CD4-positive, alpha-beta memory T cell (primary cell): ENCODE measurements at regions of chr1 and their contacts with region 1.

Region 1: GRCh38 chr1:155091071-155091709 is 12.6 kb downstream of the EFNA3 start:
- DNase-seq: peak; percentile 72 to 78 (median 74)
- H3K4me3 ChIP-seq: no peak overlapping the region
- H3K4me3 Mint-ChIP-seq: no peak overlapping the region
- H3K27ac ChIP-seq: no peak overlapping the region
- H3K27ac Mint-ChIP-seq: no peak overlapping the region
- H3K4me1 ChIP-seq: peaks cover 14% of the 10 kb centered on the region
- H3K4me1 Mint-ChIP-seq: peaks cover 3 to 10% (median 5%) of the 10 kb centered on the region in 4 donors
- H3K27me3 ChIP-seq: no peaks in the 10 kb centered on the region
- H3K27me3 Mint-ChIP-seq: peaks cover 2 to 3% of the 10 kb centered on the region in 2 donors

Region 2: GRCh38 chr1:155063550-155064110 is 27.6 kb before region 1 on chr1 and contains the start of gene EFNA4:
- CTCF ChIA-PET with region 1: interaction called, 74 read pairs
- POLR2A ChIA-PET with region 1: interaction called, 62 read pairs
- intact Hi-C with region 1: no loop called
- DNase-seq: peak; percentile 83 to 87 (median 86)
- H3K4me3 ChIP-seq: peak within 1 kb of the TSS; percentile 63 to 70
- H3K4me3 Mint-ChIP-seq: peak within 1 kb of the TSS; percentile 91 to 99 (median 94)
- H3K27ac ChIP-seq: peak within 1 kb of the TSS; percentile 51
- H3K27ac Mint-ChIP-seq: peak within 1 kb of the TSS; percentile 81 to 94 (median 85)
- H3K4me1 ChIP-seq: peaks cover 35% of the 10 kb centered on the region
- H3K4me1 Mint-ChIP-seq: peaks cover 23 to 52% (median 32%) of the 10 kb centered on the region in 4 donors
- H3K27me3 ChIP-seq: no peaks in the 10 kb centered on the region
- H3K27me3 Mint-ChIP-seq: no peaks in the 10 kb centered on the region
- total RNA-seq, gene EFNA4: 6.0 to 8.5 TPM

Region 3: GRCh38 chr1:155127105-155127964 is 36.1 kb after region 1 on chr1 and contains the start of gene EFNA1:
- CTCF ChIA-PET with region 1: interaction called, 18 read pairs
- POLR2A ChIA-PET with region 1: no interaction called
- intact Hi-C with region 1: loop called (anchors 5 kb)
- DNase-seq: peak in 4 of 5 donors; percentile 31 to 47 (median 38)
- H3K4me3 ChIP-seq: peak within 1 kb of the TSS; percentile 52 to 58
- H3K4me3 Mint-ChIP-seq: peak within 1 kb of the TSS; percentile 80 to 94 (median 89)
- H3K27ac ChIP-seq: no peak within 1 kb of the TSS
- H3K27ac Mint-ChIP-seq: peak within 1 kb of the TSS; percentile 15 to 78 (median 71)
- H3K4me1 ChIP-seq: peaks cover 32% of the 10 kb centered on the region
- H3K4me1 Mint-ChIP-seq: peaks cover 18 to 45% (median 27%) of the 10 kb centered on the region in 4 donors
- H3K27me3 ChIP-seq: peaks cover 12% of the 10 kb centered on the region
- H3K27me3 Mint-ChIP-seq: peaks cover 9 to 15% of the 10 kb centered on the region in 2 donors
- total RNA-seq, gene EFNA1: 1.2 to 1.9 TPM

Region 4: DNA sequence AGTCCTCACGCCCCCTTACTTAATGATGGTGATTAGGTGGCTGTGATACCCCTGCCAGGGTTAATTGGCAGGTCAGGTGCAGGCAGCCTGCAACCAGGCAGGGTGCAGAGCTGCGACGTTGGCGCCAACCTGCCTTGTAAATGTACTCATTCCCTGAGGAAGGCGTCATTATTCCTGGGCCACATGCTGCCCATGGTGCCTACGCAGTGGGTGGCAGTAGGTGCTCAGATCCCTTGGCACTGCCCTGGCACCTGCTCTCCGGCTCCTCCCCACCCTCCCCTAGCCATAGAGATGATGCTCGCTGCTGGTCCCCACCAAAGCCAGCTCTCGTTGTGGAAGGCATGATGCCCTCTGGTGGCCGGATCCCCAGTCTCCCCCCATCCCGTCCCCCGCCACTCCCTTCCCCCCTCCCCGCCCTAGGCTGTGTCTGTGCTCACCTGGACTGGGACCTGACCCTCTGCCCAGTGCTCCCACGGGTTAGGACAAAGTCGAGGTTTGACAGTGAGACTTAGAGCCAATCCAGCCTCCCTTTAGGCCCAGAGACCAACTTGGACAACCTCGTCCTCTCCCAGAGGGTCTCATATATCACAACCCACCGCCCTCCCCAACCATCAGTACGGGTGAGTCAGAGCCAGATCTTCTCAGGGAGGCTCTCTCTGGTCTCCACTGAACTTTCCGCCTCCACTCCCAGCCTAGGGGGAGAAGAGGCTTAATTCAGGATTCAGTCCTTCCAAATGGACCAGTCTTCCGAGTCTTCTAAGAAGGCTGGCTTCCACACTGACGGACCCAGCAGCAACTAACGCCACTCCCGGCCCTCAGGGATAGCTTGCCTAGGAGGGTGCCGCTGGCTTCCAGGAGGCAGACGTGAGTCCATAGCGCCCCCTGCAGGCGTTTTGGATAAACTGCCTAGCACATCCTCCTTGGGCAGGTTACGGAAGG is 76.2 kb after region 1 on chr1:
- CTCF ChIA-PET with region 1: interaction called, 229 read pairs
- POLR2A ChIA-PET with region 1: interaction called, 27 read pairs
- intact Hi-C with region 1: loop called (anchors 1 kb)
- DNase-seq: peak; percentile 79 to 83 (median 81)
- H3K4me3 ChIP-seq: no peak overlapping the region
- H3K4me3 Mint-ChIP-seq: peak overlapping the region in 7 of 8 donors; percentile 46 to 68 (median 59)
- H3K27ac ChIP-seq: no peak overlapping the region
- H3K27ac Mint-ChIP-seq: peak overlapping the region in 5 of 7 donors; percentile 14 to 70 (median 57)
- H3K4me1 ChIP-seq: peaks cover 22% of the 10 kb centered on the region
- H3K4me1 Mint-ChIP-seq: peaks cover 14 to 28% (median 26%) of the 10 kb centered on the region in 4 donors
- H3K27me3 ChIP-seq: no peaks in the 10 kb centered on the region
- H3K27me3 Mint-ChIP-seq: no peaks in the 10 kb centered on the region

Region 5: DNA sequence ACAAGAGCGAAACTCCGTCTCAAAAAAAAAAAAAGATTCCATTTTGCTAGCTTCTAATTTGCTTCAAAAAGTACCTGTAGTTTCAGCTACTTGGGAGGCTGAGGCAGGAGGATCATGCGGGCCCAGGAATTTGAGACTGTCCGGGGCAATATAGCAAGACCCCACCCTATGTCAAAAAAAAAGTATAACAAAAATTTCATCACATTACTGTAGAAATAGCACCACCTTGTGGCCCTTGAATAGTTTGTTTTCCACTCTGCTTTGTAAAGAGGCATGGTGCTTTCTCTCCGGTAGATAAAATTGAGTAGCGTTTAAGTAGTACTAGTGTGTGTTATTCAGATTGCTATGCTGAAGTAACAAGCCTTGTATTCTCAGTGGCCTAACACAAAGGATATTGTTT is 500.6 kb after region 1 on chr1:
- CTCF ChIA-PET with region 1: no interaction called
- POLR2A ChIA-PET with region 1: no interaction called
- intact Hi-C with region 1: loop called (anchors 5 kb)
- DNase-seq: peak in 4 of 5 donors; percentile 59 to 68 (median 62)
- H3K4me3 ChIP-seq: no peak overlapping the region
- H3K4me3 Mint-ChIP-seq: no peak overlapping the region
- H3K27ac ChIP-seq: no peak overlapping the region
- H3K27ac Mint-ChIP-seq: no peak overlapping the region
- H3K4me1 ChIP-seq: no peaks in the 10 kb centered on the region
- H3K4me1 Mint-ChIP-seq: peaks cover 0 to 3% (median 3%) of the 10 kb centered on the region in 4 donors
- H3K27me3 ChIP-seq: no peaks in the 10 kb centered on the region
- H3K27me3 Mint-ChIP-seq: no peaks in the 10 kb centered on the region